ENCODE measurements at regions of chr7 and their contacts with region 1.

Region 1: DNA sequence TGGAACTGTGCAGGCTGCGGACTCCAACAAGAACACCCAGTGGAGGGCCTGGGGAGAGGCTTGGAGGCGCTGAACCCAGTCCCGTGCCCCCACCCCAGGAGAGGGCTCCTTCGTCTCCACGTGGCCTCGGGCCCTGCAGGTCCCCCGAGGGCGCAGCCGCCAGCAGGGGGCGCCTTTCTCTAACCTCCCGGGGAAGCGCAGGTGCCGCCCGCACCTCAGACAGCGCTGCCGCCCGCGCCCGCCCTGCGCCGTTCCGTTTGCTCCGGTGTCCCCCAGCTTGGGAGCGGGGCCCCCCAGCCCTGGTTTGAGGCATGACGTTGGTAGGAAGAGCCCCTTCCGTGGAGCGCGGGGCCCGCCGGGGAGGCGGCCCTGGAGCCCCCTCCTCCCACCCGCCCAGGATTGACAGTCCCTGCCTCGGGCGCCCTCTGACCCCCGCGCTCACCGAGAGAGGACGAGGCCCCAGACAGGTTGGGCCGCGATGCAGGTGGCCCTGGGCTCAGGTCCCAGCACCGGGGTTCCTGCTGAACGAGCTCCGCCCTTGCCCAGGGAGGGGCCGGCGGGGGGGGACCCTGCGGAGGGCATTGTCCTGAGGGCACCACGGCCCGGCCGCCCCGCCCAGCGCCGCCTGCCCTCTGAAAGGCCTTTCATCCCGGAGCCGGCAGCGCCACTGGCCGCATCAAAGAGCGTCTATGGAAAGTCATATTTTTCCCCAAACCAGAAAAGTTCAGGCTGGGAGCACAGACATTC is 42.8 kb downstream of the FOXL3 start:
- DNase-seq: peak; percentile 66
- H3K4me3 Mint-ChIP-seq: no peak overlapping the region
- H3K27ac Mint-ChIP-seq: no peak overlapping the region
- H3K4me1 Mint-ChIP-seq: no peaks in the 10 kb centered on the region
- H3K27me3 Mint-ChIP-seq: peaks cover 4% of the 10 kb centered on the region

Region 2: DNA sequence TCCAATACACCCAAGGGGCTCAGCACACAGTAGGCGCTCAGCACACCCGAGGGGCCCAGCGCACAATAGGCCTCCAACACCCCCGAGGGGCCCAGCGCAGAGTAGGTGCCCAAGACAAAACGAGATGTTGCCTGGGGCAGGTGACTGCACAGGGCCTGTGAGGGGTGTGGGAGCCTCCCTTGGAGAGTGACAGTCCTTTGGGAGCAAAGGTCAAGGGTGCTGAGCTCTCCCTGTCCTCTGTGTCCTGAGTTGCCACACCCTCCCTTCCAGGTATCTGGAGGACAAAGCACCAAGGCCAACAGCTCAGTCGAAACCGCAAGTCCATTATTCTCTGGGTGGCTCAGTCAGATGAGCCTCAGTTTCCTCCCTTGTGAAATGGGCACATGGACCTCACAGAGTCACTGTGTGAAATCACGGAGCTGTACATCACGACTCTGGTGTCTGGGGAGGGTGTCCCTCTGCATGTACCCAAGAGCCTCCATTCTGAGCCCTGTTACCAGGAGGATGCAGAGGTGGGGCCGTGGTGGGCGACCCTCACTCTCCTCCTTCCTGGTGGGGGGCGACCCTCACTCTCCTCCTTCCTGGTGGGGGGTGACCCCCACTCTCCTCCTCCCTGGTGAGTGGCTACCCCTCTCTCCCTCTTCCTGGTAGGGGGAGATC is 38.4 kb after region 1 on chr7:
- intact Hi-C with region 1: no loop called
- DNase-seq: no peak
- H3K4me3 Mint-ChIP-seq: no peak overlapping the region
- H3K27ac Mint-ChIP-seq: no peak overlapping the region
- H3K4me1 Mint-ChIP-seq: peaks cover 10% of the 10 kb centered on the region
- H3K27me3 Mint-ChIP-seq: peaks cover 3% of the 10 kb centered on the region

Region 3: GRCh38 chr7:636396-636795 is 303.6 kb after region 1 on chr7:
- intact Hi-C with region 1: loop called (anchors 2 kb)
- DNase-seq: peak; percentile 29
- H3K4me3 Mint-ChIP-seq: no peak overlapping the region
- H3K27ac Mint-ChIP-seq: no peak overlapping the region
- H3K4me1 Mint-ChIP-seq: peaks cover 10% of the 10 kb centered on the region
- H3K27me3 Mint-ChIP-seq: no peaks in the 10 kb centered on the region

Region 4: DNA sequence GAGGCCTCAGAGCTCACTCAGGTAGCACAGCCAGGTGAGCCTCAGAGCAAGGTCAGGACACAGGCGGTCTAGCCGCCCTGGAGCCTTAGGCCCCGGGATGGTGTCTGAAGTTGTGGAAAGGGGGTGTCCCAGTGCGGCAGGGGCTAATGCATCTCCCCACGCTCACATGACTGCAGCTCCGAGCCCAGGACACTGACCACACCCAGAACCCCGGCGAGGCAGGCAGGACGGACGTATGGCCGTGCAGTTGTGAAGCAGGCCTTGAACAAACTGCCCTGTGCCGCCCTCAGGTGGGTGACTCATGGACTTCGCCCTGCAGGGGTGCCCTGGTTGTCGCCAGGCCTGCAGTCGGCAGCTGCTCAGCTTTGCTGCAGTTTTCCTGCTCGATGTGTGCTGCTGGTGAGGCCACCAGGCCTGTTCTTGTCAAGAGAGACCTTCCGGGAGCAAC is 399.3 kb after region 1 on chr7:
- intact Hi-C with region 1: loop called (anchors 2 kb)
- DNase-seq: no peak
- H3K4me3 Mint-ChIP-seq: no peak overlapping the region
- H3K27ac Mint-ChIP-seq: no peak overlapping the region
- H3K4me1 Mint-ChIP-seq: peaks cover 10% of the 10 kb centered on the region
- H3K27me3 Mint-ChIP-seq: no peaks in the 10 kb centered on the region

Region 5: DNA sequence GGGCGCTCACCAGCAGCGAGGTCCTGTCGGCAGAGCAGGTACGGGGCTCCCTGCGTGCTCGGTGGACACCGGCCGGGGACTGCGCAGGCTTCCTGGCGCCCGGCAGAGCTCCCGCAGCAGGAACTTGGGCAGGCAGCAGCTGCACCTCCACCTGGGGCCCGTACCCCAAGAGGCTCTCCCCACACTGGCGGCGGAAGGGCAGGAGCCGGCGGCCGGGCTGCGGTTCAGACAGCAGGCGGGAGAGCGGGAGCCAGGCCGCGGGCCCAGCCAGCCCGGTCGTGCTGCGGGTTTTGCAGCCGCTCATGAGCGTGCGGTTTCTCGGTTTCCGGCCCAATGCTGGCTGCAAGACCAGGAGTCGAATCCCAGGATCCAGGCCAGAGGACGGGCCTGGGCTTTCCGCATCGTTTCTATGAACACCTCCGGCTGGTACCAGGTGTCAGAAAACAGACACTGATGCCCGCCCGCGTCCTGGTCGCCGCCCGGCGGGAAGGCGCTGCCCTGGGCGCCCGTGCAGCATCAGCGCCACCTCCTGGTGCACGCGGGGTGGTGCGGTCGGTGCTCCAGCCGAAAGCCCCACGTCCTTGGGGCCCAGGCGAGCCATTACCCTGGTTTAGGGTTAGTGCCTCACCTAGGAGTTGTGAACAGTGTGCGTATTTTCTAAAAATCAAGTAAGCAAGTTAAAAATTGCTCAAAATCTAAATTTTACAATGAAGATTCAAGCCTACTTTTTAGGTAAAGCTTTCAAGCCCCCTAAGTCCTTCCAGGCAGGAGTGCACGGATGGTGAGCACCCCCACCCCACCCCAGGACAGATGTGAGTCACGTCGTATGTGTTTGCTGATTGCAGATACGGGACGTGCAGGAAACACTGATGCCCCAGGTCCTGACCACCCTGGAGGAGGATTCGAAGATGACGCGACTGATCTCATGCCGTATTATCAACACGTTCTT is 441.6 kb after region 1 on chr7:
- intact Hi-C with region 1: loop called (anchors 1 kb)
- DNase-seq: peak; percentile 44
- H3K4me3 Mint-ChIP-seq: no peak overlapping the region
- H3K27ac Mint-ChIP-seq: no peak overlapping the region
- H3K4me1 Mint-ChIP-seq: no peaks in the 10 kb centered on the region
- H3K27me3 Mint-ChIP-seq: no peaks in the 10 kb centered on the region